CD4-positive, alpha-beta T cell (primary cell): ENCODE measurements at regions of chr7 and their contacts with region 1.

Region 1: DNA sequence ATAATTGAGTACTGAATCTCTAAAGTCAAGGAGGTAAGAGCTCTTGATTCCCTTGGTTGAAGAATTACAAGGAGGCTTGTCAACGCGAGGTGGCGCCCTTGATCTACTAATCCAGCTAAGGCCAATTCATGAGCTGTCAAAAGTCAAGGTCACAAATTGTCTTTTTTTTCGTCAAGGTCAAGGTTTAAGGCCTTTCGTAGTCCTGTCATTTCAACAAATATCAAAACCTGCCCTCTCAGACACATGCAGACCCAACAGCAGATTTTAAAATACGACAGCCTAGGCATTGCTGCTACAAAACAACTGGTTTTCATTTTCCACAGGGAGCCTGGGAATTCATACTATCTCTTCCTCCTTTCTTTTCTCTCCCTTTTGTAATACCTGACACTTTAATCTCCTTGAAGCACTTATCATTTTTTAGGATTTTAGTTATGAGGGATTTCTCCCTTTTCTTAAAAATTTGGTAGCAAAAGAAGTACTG is 3.6 kb downstream of the HOXA13 start:
- DNase-seq: peak; percentile 75 to 89 (median 83)
- ATAC-seq: peak; percentile 51
- H3K4me3 ChIP-seq: no peak overlapping the region
- H3K4me3 Mint-ChIP-seq: peak overlapping the region; percentile 57
- H3K27ac ChIP-seq: no peak overlapping the region
- H3K27ac Mint-ChIP-seq: no peak overlapping the region
- H3K4me1 ChIP-seq: peaks cover 53% of the 10 kb centered on the region
- H3K4me1 Mint-ChIP-seq: peaks cover 43% of the 10 kb centered on the region
- H3K27me3 ChIP-seq: peaks cover 80 to 88% of the 10 kb centered on the region in 2 experiments
- H3K27me3 Mint-ChIP-seq: peaks cover 88% of the 10 kb centered on the region
- CTCF ChIP-seq: peak; percentile 84

Region 2: DNA sequence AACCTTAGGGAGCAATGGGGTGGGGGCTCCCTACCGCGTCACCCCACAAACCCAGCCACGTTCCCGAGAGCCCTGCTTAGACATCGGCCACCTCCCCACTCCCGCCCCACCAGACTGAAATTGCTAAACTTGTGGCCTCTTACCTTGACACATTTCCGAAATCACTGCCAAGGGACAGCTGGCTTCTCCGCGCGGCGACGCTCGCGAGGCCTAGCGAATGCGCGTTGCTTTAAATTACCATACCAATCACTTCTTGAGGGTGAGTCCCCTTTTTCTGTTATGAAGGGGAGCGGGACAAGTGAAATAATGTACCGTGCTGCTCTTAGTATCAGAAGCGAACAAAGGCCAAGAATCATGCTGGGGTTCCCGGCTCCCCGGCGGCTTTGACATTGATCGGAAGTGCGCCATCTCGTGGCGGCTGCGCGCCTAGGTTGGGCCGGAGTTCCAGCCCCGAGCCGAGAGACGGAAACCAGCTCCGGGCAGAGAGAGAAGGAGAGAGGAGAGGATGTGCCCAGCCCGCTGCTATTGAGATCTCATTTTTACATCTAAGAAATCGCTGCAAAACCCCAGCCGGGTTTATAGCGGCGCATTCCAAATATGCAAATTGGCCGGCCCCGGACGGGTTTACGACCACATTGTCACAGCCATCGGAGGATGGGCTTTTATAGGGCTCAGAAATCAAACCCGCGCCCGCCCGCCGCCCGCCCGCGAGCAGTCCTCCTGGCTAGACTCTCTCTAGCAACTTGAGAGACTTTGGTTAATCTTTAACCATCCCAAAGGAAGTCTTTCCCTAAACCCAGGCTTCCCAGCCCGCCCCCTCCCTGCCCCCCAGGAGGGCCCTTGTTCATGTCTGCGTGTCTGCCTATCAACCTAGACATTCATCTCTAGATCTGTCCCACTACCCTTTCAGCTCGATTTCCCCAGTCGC is 16.6 kb before region 1 on chr7:
- CTCF ChIA-PET with region 1: interaction called, 17 read pairs
- POLR2A ChIA-PET with region 1: interaction called, 4 read pairs
- intact Hi-C with region 1: no loop called
- DNase-seq: peak in 11 of 14 experiments; percentile 41 to 85 (median 56)
- ATAC-seq: peak; percentile 78
- H3K4me3 ChIP-seq: no peak overlapping the region
- H3K4me3 Mint-ChIP-seq: peak overlapping the region; percentile 57
- H3K27ac ChIP-seq: no peak overlapping the region
- H3K27ac Mint-ChIP-seq: no peak overlapping the region
- H3K4me1 ChIP-seq: peaks cover 28% of the 10 kb centered on the region
- H3K4me1 Mint-ChIP-seq: peaks cover 18% of the 10 kb centered on the region
- H3K27me3 ChIP-seq: peaks cover 73 to 90% of the 10 kb centered on the region in 2 experiments
- H3K27me3 Mint-ChIP-seq: peaks cover 96% of the 10 kb centered on the region
- CTCF ChIP-seq: peak; percentile 90

Region 3: DNA sequence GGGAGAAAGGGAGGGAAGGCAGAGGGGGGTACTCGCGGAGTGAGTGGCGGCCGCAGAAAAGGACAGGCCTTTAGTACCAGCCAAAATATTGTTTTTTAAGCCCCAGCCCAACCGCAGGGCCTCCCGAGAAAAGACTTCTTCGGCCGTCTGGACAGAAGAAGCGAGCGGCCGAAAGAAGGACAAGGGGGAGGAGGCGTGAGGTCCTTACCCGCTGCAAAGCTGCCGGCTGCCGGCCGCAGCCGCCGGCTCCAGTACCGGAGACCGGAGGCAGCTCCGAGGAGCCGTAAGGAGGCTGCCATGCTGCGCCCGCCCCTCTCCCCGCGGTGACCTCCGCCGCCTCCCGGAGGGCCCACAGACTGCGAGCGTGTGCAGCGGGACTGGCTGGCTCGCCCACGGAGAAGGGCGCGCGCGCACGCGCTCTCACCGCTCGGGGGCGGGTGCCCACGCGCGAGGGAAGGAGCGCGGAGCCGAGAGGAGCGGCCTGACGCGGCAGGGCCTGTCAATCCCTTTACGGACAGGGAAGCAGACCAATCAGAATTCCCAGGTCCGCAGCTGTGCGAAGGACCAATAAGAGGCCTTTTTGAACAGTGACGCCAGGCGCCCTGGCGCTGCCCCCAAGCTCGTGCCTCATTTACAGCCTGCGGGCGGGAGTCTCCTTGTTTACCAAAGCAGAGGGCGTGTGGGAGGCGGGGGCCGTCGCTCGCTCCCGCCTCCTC is 466.3 kb after region 1 on chr7 and contains the start of gene HIBADH:
- CTCF ChIA-PET with region 1: no interaction called
- POLR2A ChIA-PET with region 1: interaction called, 4 read pairs
- intact Hi-C with region 1: loop called (anchors 5 to 10 kb)
- DNase-seq: peak; percentile 89 to 99 (median 95)
- ATAC-seq: peak; percentile 94
- H3K4me3 ChIP-seq: peak within 1 kb of the TSS; percentile 98
- H3K4me3 Mint-ChIP-seq: peak within 1 kb of the TSS; percentile 93
- H3K27ac ChIP-seq: peak within 1 kb of the TSS; percentile 50 to 83
- H3K27ac Mint-ChIP-seq: peak within 1 kb of the TSS; percentile 99
- H3K4me1 ChIP-seq: peaks cover 16% of the 10 kb centered on the region
- H3K4me1 Mint-ChIP-seq: peaks cover 20% of the 10 kb centered on the region
- H3K27me3 ChIP-seq: no peaks in the 10 kb centered on the region
- H3K27me3 Mint-ChIP-seq: no peaks in the 10 kb centered on the region
- CTCF ChIP-seq: peak; percentile 19
- total RNA-seq, gene HIBADH: 6.3 to 8.4 TPM

Region 4: GRCh38 chr7:27784393-27785053 is 588.2 kb after region 1 on chr7:
- CTCF ChIA-PET with region 1: interaction called, 3 read pairs
- POLR2A ChIA-PET with region 1: no interaction called
- intact Hi-C with region 1: loop called (anchors 1 to 5 kb)
- DNase-seq: peak in 5 of 14 experiments; percentile 1 to 71 (median 55)
- ATAC-seq: peak; percentile 63
- H3K4me3 ChIP-seq: no peak overlapping the region
- H3K4me3 Mint-ChIP-seq: no peak overlapping the region
- H3K27ac ChIP-seq: no peak overlapping the region
- H3K27ac Mint-ChIP-seq: no peak overlapping the region
- H3K4me1 ChIP-seq: no peaks in the 10 kb centered on the region
- H3K4me1 Mint-ChIP-seq: peaks cover 17% of the 10 kb centered on the region
- H3K27me3 ChIP-seq: no peaks in the 10 kb centered on the region
- H3K27me3 Mint-ChIP-seq: no peaks in the 10 kb centered on the region
- CTCF ChIP-seq: peak; percentile 73

Region 5: DNA sequence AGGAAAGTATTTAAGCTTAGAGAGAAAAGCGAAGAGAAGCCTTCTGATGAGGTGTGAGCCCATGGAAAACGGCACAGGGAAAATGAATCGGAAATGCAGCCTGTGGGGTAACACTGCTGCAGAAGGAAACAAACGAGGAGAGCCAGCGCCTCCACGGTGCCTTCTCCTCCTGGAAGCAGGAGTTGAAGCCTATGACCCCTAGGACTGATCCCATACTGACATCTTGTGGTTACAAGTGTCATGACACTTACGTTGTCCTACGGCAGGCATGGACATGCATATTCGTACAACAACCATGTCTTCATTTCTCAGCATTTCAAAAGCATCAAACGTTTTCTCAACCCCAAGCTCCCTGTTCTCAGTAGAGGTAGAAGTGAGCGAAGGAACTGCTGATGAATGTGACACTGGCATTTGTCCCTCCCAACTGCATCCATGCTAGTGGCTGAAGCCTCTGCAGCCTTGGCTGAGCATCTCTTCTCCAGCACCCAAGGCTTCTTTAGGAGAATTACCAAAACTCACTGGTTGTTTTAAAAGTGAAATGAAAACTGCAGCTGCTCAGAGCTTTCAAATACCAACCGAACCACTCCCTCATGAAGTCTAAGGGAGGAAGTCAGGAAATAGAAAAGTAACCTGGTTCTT is 824.1 kb after region 1 on chr7:
- CTCF ChIA-PET with region 1: interaction called, 7 read pairs
- POLR2A ChIA-PET with region 1: interaction called, 8 read pairs
- intact Hi-C with region 1: loop called (anchors 1 kb)
- DNase-seq: peak in 11 of 14 experiments; percentile 3 to 76 (median 15)
- ATAC-seq: peak; percentile 76
- H3K4me3 ChIP-seq: no peak overlapping the region
- H3K4me3 Mint-ChIP-seq: no peak overlapping the region
- H3K27ac ChIP-seq: no peak overlapping the region
- H3K27ac Mint-ChIP-seq: no peak overlapping the region
- H3K4me1 ChIP-seq: peaks cover 6% of the 10 kb centered on the region
- H3K4me1 Mint-ChIP-seq: peaks cover 9% of the 10 kb centered on the region
- H3K27me3 ChIP-seq: no peaks in the 10 kb centered on the region
- H3K27me3 Mint-ChIP-seq: no peaks in the 10 kb centered on the region
- CTCF ChIP-seq: peak; percentile 88

Region 6: GRCh38 chr7:28096713-28097112 is 900.4 kb after region 1 on chr7:
- CTCF ChIA-PET with region 1: interaction called, 6 read pairs
- POLR2A ChIA-PET with region 1: no interaction called
- intact Hi-C with region 1: loop called (anchors 1 to 5 kb)
- DNase-seq: peak in 12 of 14 experiments; percentile 12 to 76 (median 24)
- ATAC-seq: peak; percentile 68
- H3K4me3 ChIP-seq: no peak overlapping the region
- H3K4me3 Mint-ChIP-seq: no peak overlapping the region
- H3K27ac ChIP-seq: no peak overlapping the region
- H3K27ac Mint-ChIP-seq: no peak overlapping the region
- H3K4me1 ChIP-seq: peaks cover 3% of the 10 kb centered on the region
- H3K4me1 Mint-ChIP-seq: peaks cover 9% of the 10 kb centered on the region
- H3K27me3 ChIP-seq: no peaks in the 10 kb centered on the region
- H3K27me3 Mint-ChIP-seq: no peaks in the 10 kb centered on the region
- CTCF ChIP-seq: peak; percentile 95